ENCODE measurements at regions of chr2 and their contacts with region 1.

Region 1: GRCh38 chr2:35410431-35411061 is 945.0 kb upstream of the CRIM1 start:
- DNase-seq: peak; percentile 25
- ATAC-seq: no peak
- H3K4me3 ChIP-seq: no peak overlapping the region
- H3K27ac ChIP-seq: no peak overlapping the region
- H3K4me1 ChIP-seq: no peaks in the 10 kb centered on the region
- H3K27me3 ChIP-seq: no peaks in the 10 kb centered on the region
- CTCF ChIP-seq: peak; percentile 90

Region 2: GRCh38 chr2:33673937-33674336 is 1736.6 kb before region 1 on chr2:
- CTCF ChIA-PET with region 1: no interaction called
- POLR2A ChIA-PET with region 1: no interaction called
- in situ Hi-C with region 1: no loop called
- intact Hi-C with region 1: loop called (anchors 10 kb)
- DNase-seq: no peak
- ATAC-seq: no peak
- H3K4me3 ChIP-seq: no peak overlapping the region
- H3K27ac ChIP-seq: no peak overlapping the region
- H3K4me1 ChIP-seq: no peaks in the 10 kb centered on the region
- H3K27me3 ChIP-seq: 0 out of 2 replicates have a peak, but pooled peaks cover 2% of the 10 kb centered on the region
- CTCF ChIP-seq: peak; percentile 59

Region 3: GRCh38 chr2:34096562-34097171 is 1313.9 kb before region 1 on chr2:
- CTCF ChIA-PET with region 1: no interaction called
- POLR2A ChIA-PET with region 1: no interaction called
- in situ Hi-C with region 1: no loop called
- intact Hi-C with region 1: loop called (anchors 2 kb)
- DNase-seq: peak; percentile 65
- ATAC-seq: peak; percentile 70
- H3K4me3 ChIP-seq: no peak overlapping the region
- H3K27ac ChIP-seq: no peak overlapping the region
- H3K4me1 ChIP-seq: no peaks in the 10 kb centered on the region
- H3K27me3 ChIP-seq: no peaks in the 10 kb centered on the region
- CTCF ChIP-seq: peak; percentile 77

Region 4: GRCh38 chr2:35168354-35168753 is 242.2 kb before region 1 on chr2:
- CTCF ChIA-PET with region 1: no interaction called
- POLR2A ChIA-PET with region 1: no interaction called
- in situ Hi-C with region 1: no loop called
- intact Hi-C with region 1: loop called (anchors 10 kb)
- DNase-seq: no peak
- ATAC-seq: no peak
- H3K4me3 ChIP-seq: no peak overlapping the region
- H3K27ac ChIP-seq: no peak overlapping the region
- H3K4me1 ChIP-seq: no peaks in the 10 kb centered on the region
- H3K27me3 ChIP-seq: no peaks in the 10 kb centered on the region
- CTCF ChIP-seq: no peak

Measured in Panc1 (cell line).